ENCODE measurements at regions of chr16 and their contacts with region 1.

Region 1: GRCh38 chr16:29729116-29729521 is 16.7 kb downstream of the C16orf54 start:
- DNase-seq: no peak
- H3K4me3 Mint-ChIP-seq: no peak overlapping the region
- H3K27ac Mint-ChIP-seq: no peak overlapping the region
- H3K4me1 Mint-ChIP-seq: peaks cover 27% of the 10 kb centered on the region
- H3K27me3 Mint-ChIP-seq: no peaks in the 10 kb centered on the region

Region 2: DNA sequence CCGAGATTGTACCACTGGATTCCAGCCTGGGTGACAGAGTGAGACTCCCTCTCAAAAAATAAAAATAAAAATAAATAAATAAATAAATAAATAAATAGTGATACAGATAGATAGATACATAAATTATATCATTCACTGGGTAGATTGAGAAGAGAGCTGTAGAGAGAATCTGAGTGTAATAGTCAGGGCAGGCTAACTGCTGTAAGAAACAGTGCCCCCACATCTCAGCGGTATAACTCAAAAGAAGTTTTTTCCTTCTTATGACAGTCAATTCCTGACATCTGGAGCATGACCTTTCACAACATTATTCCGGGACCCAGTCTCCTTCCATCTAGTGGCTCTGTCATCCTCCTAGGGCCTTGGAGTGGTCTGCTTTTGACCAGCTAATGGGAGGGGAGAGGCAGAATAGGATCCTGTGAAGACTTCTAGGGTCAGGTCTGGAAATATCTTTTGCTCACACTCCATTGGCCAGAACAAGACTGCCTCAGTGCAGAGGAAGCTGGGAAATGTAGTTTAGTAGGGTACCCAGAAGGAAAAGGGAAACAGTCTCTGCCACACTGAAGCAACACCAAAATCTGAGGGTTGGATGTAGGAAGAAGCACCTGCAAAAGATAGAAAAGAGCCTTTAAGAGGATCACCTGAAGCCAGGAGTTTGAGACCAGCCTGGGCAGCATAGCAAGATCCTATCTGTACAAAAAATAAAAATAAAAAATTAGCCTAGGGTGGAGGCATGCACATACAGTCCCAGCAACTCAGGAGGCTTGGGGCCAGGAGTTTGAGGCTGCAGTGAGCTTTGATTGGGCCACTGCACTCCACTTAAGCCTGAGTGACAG is 53.1 kb before region 1 on chr16:
- CTCF ChIA-PET with region 1: no interaction called
- POLR2A ChIA-PET with region 1: no interaction called
- intact Hi-C with region 1: no loop called
- DNase-seq: no peak
- H3K4me3 Mint-ChIP-seq: no peak overlapping the region
- H3K27ac Mint-ChIP-seq: peak overlapping the region; percentile 30
- H3K4me1 Mint-ChIP-seq: peaks cover 16% of the 10 kb centered on the region
- H3K27me3 Mint-ChIP-seq: no peaks in the 10 kb centered on the region

Region 3: GRCh38 chr16:29745853-29746345 is 16.8 kb after region 1 on chr16 and contains the start of gene C16orf54:
- CTCF ChIA-PET with region 1: interaction called, 4 read pairs
- POLR2A ChIA-PET with region 1: interaction called, 17 read pairs
- intact Hi-C with region 1: loop called (anchors 1 kb)
- DNase-seq: peak; percentile 97
- H3K4me3 Mint-ChIP-seq: peak within 1 kb of the TSS; percentile 97
- H3K27ac Mint-ChIP-seq: peak within 1 kb of the TSS; percentile 98
- H3K4me1 Mint-ChIP-seq: peaks cover 60% of the 10 kb centered on the region
- H3K27me3 Mint-ChIP-seq: no peaks in the 10 kb centered on the region
- total RNA-seq, gene C16orf54: 25.2 to 26.2 TPM

Measured in activated CD4-positive, alpha-beta memory T cell treated with anti-CD3 and anti-CD28 coated beads for 36 hours (primary cell).